A549 (cell line): ENCODE measurements at regions of chr11 and their contacts with region 1.

Region 1: DNA sequence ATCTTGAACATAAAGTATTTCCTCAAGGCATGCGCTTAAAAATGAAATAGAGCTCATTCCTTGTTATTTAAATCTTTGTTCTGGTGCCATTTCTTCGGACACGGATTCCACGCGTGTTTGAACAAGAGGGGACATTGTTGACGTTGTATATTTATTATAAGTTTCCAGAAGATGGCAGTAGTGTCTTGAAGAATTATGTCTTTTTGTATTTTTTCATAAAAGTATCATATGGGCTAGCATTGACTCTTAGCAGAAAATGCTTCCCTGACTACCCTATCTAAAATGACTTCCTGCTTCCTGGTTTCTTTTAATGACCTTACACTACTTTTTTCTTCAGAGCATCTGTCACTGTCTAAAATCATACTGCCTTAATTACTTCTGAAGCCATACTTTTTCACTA is 20.4 kb downstream of the BIRC2 start:
- DNase-seq: peak; percentile 10 to 29
- ATAC-seq: peak; percentile 39 to 69; a peak in 3 of 6 replicates
- H3K4me3 ChIP-seq: no peak overlapping the region
- H3K27ac ChIP-seq: no peak overlapping the region
- H3K4me1 ChIP-seq: no peaks in the 10 kb centered on the region; the same call in 2 of the 3 replicates
- CTCF ChIP-seq: peak; percentile 46
- EP300 ChIP-seq: no peak
- POLR2A ChIP-seq: no peak
- RAD21 ChIP-seq: peak; percentile 45 to 64

Region 2: GRCh38 chr11:102346748-102347461 is 20.5 kb before region 1 on chr11 and contains the start of gene BIRC2:
- CTCF ChIA-PET with region 1: interaction called, 15 read pairs
- POLR2A ChIA-PET with region 1: no interaction called
- DNase-seq: peak; percentile 36 to 89
- ATAC-seq: peak; percentile 91 to 95
- H3K4me3 ChIP-seq: peak within 1 kb of the TSS; percentile 74
- H3K27ac ChIP-seq: peak within 1 kb of the TSS; percentile 94 to 100
- H3K4me1 ChIP-seq: peaks cover 38% of the 10 kb centered on the region
- CTCF ChIP-seq: peak; percentile 57
- EP300 ChIP-seq: no peak
- POLR2A ChIP-seq: peak; percentile 69
- RAD21 ChIP-seq: peak in 1 of 2 experiments; percentile 51; a peak in 3 of 5 replicates
- polyA plus RNA-seq, gene BIRC2: 60.4 and 70.9 TPM in 2 replicates

Region 3: DNA sequence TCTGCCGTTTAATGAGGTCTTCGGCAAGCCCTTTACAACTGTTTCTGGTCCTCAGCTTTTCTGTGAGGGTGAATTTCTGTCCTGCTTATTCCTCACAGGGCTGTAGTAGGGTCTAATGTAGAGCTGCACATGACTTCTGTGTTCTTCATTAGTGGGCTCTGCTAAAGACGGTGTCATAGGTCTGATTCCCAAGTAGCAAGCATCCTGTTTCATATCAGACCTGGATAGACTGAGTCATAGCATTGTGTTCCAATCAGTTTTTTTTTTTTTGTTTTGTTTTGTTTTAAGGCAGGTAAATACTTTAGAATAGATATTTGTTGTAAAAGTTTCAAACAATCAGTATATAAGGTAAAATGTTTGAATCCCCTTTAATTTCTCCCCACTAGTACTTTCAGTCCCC is 15.0 kb after region 1 on chr11:
- CTCF ChIA-PET with region 1: interaction called, 13 read pairs
- POLR2A ChIA-PET with region 1: no interaction called
- DNase-seq: no peak
- ATAC-seq: no peak
- H3K4me3 ChIP-seq: no peak overlapping the region
- H3K27ac ChIP-seq: no peak overlapping the region
- H3K4me1 ChIP-seq: 0 out of 3 replicates have a peak, but pooled peaks cover 2% of the 10 kb centered on the region
- CTCF ChIP-seq: no peak
- EP300 ChIP-seq: no peak
- POLR2A ChIP-seq: no peak
- RAD21 ChIP-seq: no peak

Region 4: GRCh38 chr11:102390667-102391465 is 23.5 kb after region 1 on chr11:
- CTCF ChIA-PET with region 1: interaction called, 13 read pairs
- POLR2A ChIA-PET with region 1: no interaction called
- DNase-seq: peak; percentile 24 to 75
- ATAC-seq: peak; percentile 92 to 94
- H3K4me3 ChIP-seq: no peak overlapping the region
- H3K27ac ChIP-seq: peak overlapping the region in 1 of 2 experiments; percentile 54; a peak in 2 of 6 replicates
- H3K4me1 ChIP-seq: 0 out of 3 replicates have a peak, but pooled peaks cover 2% of the 10 kb centered on the region
- CTCF ChIP-seq: peak; percentile 63
- EP300 ChIP-seq: no peak
- POLR2A ChIP-seq: no peak
- RAD21 ChIP-seq: peak; percentile 65 to 78

Region 5: DNA sequence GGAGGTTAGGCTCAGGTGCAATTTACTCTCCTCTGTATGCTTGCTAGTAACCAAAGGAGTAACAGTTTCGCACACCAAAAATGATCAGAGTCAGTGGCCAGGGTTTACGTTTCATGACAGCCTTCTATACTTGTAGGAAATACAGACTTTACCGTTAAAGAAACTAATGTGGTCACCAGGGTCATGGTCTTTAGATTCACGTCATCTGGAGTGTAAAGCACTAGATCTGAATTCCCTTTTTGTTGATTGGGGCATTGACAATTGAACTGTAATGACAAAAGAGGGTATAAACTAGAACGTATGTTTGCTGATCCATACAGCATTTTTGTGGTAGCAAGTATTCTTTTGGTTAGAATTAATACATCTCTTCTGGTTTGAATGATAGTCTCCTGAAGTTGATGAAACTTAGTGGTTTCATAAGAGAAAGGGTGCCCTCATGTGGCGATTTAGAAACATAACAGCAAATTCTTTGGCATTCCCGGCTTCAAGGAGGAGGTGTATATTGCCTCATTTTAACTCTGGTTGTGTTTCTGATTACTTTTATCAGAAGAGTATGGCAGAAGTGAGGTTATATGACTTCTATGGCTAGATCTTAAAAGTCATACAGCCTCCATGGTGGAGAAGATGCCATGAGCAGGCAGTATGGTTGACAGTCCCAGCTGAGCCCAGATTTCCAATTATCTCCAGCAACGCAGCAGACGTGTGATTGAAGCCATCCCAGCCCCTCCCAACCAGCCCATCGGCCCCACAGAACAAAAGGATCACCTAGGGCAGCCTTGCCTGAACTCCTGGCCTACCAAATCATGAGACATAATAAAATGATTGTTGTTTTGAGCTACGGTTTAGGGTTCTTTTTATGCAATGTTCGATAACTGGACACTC is 128.0 kb after region 1 on chr11:
- CTCF ChIA-PET with region 1: interaction called, 14 read pairs
- POLR2A ChIA-PET with region 1: no interaction called
- DNase-seq: peak; percentile 41 to 86
- ATAC-seq: peak; percentile 81 to 85
- H3K4me3 ChIP-seq: no peak overlapping the region
- H3K27ac ChIP-seq: peak overlapping the region; percentile 71 to 80
- H3K4me1 ChIP-seq: peaks cover 36% of the 10 kb centered on the region
- CTCF ChIP-seq: peak; percentile 69
- EP300 ChIP-seq: no peak
- POLR2A ChIP-seq: no peak
- RAD21 ChIP-seq: peak; percentile 83 to 91